Activated CD8-positive, alpha-beta T cell treated with anti-CD3 and anti-CD28 coated beads for 36 hours (primary cell): ENCODE measurements at regions of chr7 and their contacts with region 1.

Region 1: GRCh38 chr7:149440222-149440621 is 20.6 kb downstream of the ZNF777 start:
- DNase-seq: peak; percentile 64
- ATAC-seq: peak; percentile 96
- H3K4me3 Mint-ChIP-seq: no peak overlapping the region
- H3K27ac Mint-ChIP-seq: peak overlapping the region; percentile 81
- H3K4me1 Mint-ChIP-seq: peaks cover 15% of the 10 kb centered on the region
- H3K27me3 Mint-ChIP-seq: no peaks in the 10 kb centered on the region
- CTCF ChIP-seq: no peak

Region 2: GRCh38 chr7:149460493-149461277 is 20.5 kb after region 1 on chr7 and contains the start of gene ZNF777:
- CTCF ChIA-PET with region 1: interaction called, 21 read pairs
- POLR2A ChIA-PET with region 1: interaction called, 4 read pairs
- intact Hi-C with region 1: no loop called
- DNase-seq: peak; percentile 87
- ATAC-seq: peak; percentile 95
- H3K4me3 Mint-ChIP-seq: peak within 1 kb of the TSS; percentile 77
- H3K27ac Mint-ChIP-seq: peak within 1 kb of the TSS; percentile 86
- H3K4me1 Mint-ChIP-seq: peaks cover 18% of the 10 kb centered on the region
- H3K27me3 Mint-ChIP-seq: peaks cover 9% of the 10 kb centered on the region
- CTCF ChIP-seq: peak; percentile 59
- total RNA-seq, gene ZNF777: 11.7 to 12.5 TPM